Naive thymus-derived CD4-positive, alpha-beta T cell (primary cell): ENCODE measurements at regions of chr19 and their contacts with region 1.

Region 1: DNA sequence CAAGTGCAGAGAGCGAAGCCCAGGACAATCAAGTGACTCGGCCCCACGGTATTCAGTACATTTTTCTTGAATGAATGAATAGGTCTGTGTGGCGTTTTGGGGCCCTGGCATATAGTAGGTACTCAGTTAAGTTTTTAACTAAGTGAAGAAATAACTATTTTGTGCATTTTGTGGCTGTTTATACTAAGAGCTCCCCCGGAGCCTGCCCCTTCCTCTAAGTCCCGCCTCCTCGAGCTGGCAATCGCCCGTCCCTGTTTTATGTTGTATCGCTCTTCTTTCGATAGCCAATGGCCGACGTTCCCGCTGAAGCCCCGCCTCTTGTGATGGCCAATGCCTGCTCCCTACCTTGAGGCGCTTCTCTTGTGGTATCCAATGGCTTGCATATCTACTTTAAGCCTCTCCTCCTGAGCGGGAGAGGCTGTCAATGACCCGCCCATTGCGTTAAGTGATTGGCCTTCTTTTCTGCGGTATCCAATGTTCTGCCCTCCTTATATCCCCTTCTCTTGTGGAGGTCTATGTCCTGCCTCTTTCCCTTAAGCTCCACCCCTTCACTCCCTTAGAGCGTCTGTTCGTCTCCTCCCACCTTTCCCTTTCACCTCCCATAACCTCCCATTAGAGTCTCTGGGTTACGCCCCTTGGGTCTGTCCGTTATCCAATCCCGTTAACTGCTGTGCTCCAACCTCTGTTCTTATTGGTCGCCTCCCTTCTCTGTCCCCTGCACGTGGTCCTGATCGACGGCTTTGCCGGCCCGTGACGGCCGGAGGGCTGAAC is 509 bp upstream of the HDGFL2 start:
- DNase-seq: peak; percentile 78 to 100 (median 98)
- ATAC-seq: peak; percentile 90
- H3K4me3 ChIP-seq: peak overlapping the region; percentile 71
- H3K4me3 Mint-ChIP-seq: no peak overlapping the region
- H3K27ac ChIP-seq: peak overlapping the region; percentile 77
- H3K27ac Mint-ChIP-seq: no peak overlapping the region
- H3K4me1 ChIP-seq: peaks cover 7 to 12% of the 10 kb centered on the region in 2 donors
- H3K4me1 Mint-ChIP-seq: peaks cover 11 to 25% (median 24%) of the 10 kb centered on the region in 7 donors
- H3K27me3 ChIP-seq: no peaks in the 10 kb centered on the region
- H3K27me3 Mint-ChIP-seq: no peaks in the 10 kb centered on the region

Region 2: GRCh38 chr19:3557461-3558248 is 913.9 kb before region 1 on chr19 and contains the start of gene MFSD12:
- CTCF ChIA-PET with region 1: no interaction called
- POLR2A ChIA-PET with region 1: no interaction called
- intact Hi-C with region 1: loop called in 1 of 2 experiments (anchors 10 kb)
- DNase-seq: peak; percentile 88 to 98 (median 93)
- ATAC-seq: peak; percentile 94
- H3K4me3 ChIP-seq: peak within 1 kb of the TSS; percentile 90
- H3K4me3 Mint-ChIP-seq: peak within 1 kb of the TSS; percentile 92 to 100 (median 96)
- H3K27ac ChIP-seq: peak within 1 kb of the TSS; percentile 83
- H3K27ac Mint-ChIP-seq: peak within 1 kb of the TSS; percentile 92 to 97 (median 95)
- H3K4me1 ChIP-seq: peaks cover 25 to 30% of the 10 kb centered on the region in 2 donors
- H3K4me1 Mint-ChIP-seq: peaks cover 18 to 40% (median 38%) of the 10 kb centered on the region in 7 donors
- H3K27me3 ChIP-seq: no peaks in the 10 kb centered on the region
- H3K27me3 Mint-ChIP-seq: no peaks in the 10 kb centered on the region
- total RNA-seq, gene MFSD12: 95.2 to 153 (median 101) TPM

Region 3: GRCh38 chr19:4182084-4182810 is 289.3 kb before region 1 on chr19 and contains the starts of genes ANKRD24 and SIRT6:
- CTCF ChIA-PET with region 1: no interaction called
- POLR2A ChIA-PET with region 1: no interaction called
- intact Hi-C with region 1: loop called in 1 of 2 experiments (anchors 2 kb)
- DNase-seq: peak; percentile 91 to 97 (median 96)
- ATAC-seq: peak; percentile 90
- H3K4me3 ChIP-seq: peak within 1 kb of the TSS; percentile 90
- H3K4me3 Mint-ChIP-seq: peak within 1 kb of the TSS; percentile 92 to 99 (median 96)
- H3K27ac ChIP-seq: peak within 1 kb of the TSS; percentile 86
- H3K27ac Mint-ChIP-seq: peak within 1 kb of the TSS; percentile 92 to 98 (median 95)
- H3K4me1 ChIP-seq: peaks cover 14 to 15% of the 10 kb centered on the region in 2 donors
- H3K4me1 Mint-ChIP-seq: peaks cover 25 to 44% (median 39%) of the 10 kb centered on the region in 7 donors
- H3K27me3 ChIP-seq: no peaks in the 10 kb centered on the region
- H3K27me3 Mint-ChIP-seq: peaks cover 0 to 2% (median 0%) of the 10 kb centered on the region in 5 donors
- total RNA-seq, gene ANKRD24: 0.75 to 2.8 (median 2.4) TPM
- total RNA-seq, gene SIRT6: 20.0 to 41.2 (median 26.0) TPM

Region 4: DNA sequence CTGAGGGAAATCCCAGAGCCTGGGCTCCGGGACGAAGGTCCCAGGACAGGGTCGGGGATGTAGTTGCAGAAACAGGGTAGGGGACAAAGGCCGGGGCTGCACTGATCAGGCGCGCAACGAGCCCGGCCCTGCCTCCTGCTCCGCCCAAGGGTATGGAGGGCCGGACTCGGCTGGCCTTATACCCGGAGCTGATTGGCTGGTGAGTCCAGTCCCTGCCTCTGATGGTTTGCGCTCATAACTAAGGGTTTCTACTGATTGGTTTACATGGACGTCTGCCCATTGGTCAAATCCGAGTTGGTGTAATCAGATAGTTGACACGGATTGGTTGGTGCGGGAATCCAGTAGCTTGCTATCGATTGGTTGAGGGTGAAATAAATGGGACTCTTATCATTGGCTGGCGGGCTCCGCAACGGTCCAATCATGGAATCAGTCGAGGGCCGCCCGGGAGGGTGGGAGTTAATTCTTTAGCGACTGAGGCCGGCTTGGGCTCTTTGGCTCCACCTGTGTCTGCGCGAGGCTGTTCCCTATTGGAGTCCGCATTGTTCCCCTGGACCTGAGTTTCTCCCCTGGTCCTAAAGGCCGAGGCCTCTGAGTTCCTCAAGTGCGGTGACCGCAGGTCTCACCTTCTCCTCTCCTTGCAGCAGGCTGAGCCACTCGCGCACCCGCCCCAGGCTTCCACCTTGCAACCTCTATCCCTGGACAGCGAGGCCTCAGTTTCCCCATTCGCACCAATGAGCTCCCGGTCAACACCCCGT is 128.8 kb before region 1 on chr19:
- CTCF ChIA-PET with region 1: no interaction called
- POLR2A ChIA-PET with region 1: interaction called, 9 read pairs
- intact Hi-C with region 1: loop called in 1 of 2 experiments (anchors 2 kb)
- DNase-seq: peak; percentile 73 to 98 (median 97)
- ATAC-seq: peak; percentile 88
- H3K4me3 ChIP-seq: peak overlapping the region; percentile 100
- H3K4me3 Mint-ChIP-seq: peak overlapping the region; percentile 88 to 95 (median 92)
- H3K27ac ChIP-seq: peak overlapping the region; percentile 81
- H3K27ac Mint-ChIP-seq: peak overlapping the region; percentile 86 to 97 (median 94)
- H3K4me1 ChIP-seq: peaks cover 8 to 20% of the 10 kb centered on the region in 2 donors
- H3K4me1 Mint-ChIP-seq: peaks cover 20 to 46% (median 30%) of the 10 kb centered on the region in 7 donors
- H3K27me3 ChIP-seq: no peaks in the 10 kb centered on the region
- H3K27me3 Mint-ChIP-seq: peaks cover 0 to 2% (median 0%) of the 10 kb centered on the region in 5 donors

Region 5: DNA sequence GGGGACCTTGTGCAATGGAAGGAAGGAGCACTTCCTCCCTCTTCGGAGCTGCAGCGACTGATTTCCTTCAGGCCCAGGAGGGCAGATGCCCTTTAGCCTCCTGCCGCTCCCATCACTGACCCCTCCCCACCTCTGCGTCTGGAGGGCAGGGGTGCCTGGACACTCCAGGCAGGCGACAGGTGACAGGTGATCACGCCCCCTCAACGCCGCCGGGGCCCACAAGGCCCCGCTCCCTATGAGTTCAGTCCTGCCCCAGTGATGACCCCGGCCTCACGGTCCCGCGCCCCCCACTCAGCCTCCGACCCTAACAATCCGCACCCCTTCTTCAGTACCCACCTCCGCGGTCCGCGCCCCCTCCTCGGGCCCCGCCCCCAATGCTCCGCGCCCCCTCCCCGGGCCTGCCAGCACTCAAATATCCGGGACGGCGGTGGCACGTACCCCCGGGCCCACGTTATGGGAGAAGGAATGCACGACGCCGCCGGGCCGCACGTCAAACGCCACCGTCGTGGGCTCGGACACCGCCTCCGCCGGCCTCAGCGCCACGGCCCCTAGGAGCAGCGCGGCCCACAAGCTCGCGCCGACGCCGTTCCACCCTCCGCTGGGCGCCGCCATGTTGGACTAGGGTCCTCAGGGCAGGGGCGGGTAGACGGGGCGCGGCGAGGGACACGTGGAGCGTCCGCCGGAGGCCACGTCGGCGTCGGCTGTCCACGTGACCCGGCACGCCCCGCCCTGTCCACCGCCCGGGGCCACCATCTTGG is 198.3 kb after region 1 on chr19 and contains the start of gene MYDGF:
- CTCF ChIA-PET with region 1: no interaction called
- POLR2A ChIA-PET with region 1: no interaction called
- intact Hi-C with region 1: loop called in 1 of 2 experiments (anchors 1 kb)
- DNase-seq: peak; percentile 86 to 95 (median 92)
- ATAC-seq: peak; percentile 100
- H3K4me3 ChIP-seq: peak within 1 kb of the TSS; percentile 65
- H3K4me3 Mint-ChIP-seq: peak within 1 kb of the TSS; percentile 77 to 92 (median 86)
- H3K27ac ChIP-seq: peak within 1 kb of the TSS; percentile 81
- H3K27ac Mint-ChIP-seq: peak within 1 kb of the TSS; percentile 28 to 95 (median 84)
- H3K4me1 ChIP-seq: peaks cover 10 to 13% of the 10 kb centered on the region in 2 donors
- H3K4me1 Mint-ChIP-seq: peaks cover 0 to 20% (median 16%) of the 10 kb centered on the region in 7 donors
- H3K27me3 ChIP-seq: no peaks in the 10 kb centered on the region
- H3K27me3 Mint-ChIP-seq: no peaks in the 10 kb centered on the region
- total RNA-seq, gene MYDGF: 28.1 to 81.0 (median 32.1) TPM

Region 6: GRCh38 chr19:5719961-5720790 is 1248.6 kb after region 1 on chr19 and contains the starts of genes CATSPERD and LONP1:
- CTCF ChIA-PET with region 1: no interaction called
- POLR2A ChIA-PET with region 1: no interaction called
- intact Hi-C with region 1: loop called in 1 of 2 experiments (anchors 2 kb)
- DNase-seq: peak; percentile 96 to 100 (median 98)
- ATAC-seq: peak; percentile 95
- H3K4me3 ChIP-seq: peak within 1 kb of the TSS; percentile 86
- H3K4me3 Mint-ChIP-seq: peak within 1 kb of the TSS; percentile 87 to 96 (median 93)
- H3K27ac ChIP-seq: peak within 1 kb of the TSS; percentile 97
- H3K27ac Mint-ChIP-seq: peak within 1 kb of the TSS; percentile 94 to 98 (median 95)
- H3K4me1 ChIP-seq: peaks cover 12 to 16% of the 10 kb centered on the region in 2 donors
- H3K4me1 Mint-ChIP-seq: peaks cover 9 to 42% (median 29%) of the 10 kb centered on the region in 7 donors
- H3K27me3 ChIP-seq: no peaks in the 10 kb centered on the region
- H3K27me3 Mint-ChIP-seq: peaks cover 0 to 2% (median 0%) of the 10 kb centered on the region in 5 donors
- total RNA-seq, gene CATSPERD: 0.07 TPM in 1 of 5 experiments, not detected in the others
- total RNA-seq, gene LONP1: 62.8 to 102 (median 74.8) TPM